Activated CD8-positive, alpha-beta T cell treated with anti-CD3 and anti-CD28 coated beads, Interleukin-2, amount 10 ng/mL, durations not matched to agents 7 days and 5 days (primary cell): ENCODE measurements at regions of chr1 and their contacts with region 1.

Region 1: DNA sequence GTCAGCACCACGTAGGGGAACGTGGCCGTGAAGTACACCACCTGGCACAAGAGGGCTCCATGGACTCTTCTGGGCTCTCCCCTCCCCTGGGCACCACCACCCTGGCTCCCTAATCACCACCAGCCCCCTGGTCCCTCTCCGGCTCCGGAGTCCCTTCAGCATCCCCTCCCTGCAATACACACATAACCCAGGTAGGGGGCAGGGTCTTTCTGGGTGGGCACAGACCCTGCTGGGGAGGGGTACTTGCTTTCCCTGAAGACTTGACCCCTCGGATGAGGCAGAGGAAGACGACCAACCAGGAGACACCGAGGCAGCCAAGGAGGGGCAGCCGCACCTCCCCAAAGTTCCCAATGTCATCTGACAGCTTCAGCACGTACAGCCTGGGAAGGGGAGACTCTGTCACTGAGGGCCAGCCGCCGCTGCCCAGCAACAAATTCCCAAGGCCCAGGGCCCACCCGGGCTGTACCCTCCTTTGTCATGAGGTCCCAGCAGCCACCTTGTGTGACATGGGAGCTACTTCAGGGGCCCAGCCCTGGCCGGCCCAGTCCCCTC is 11.3 kb downstream of the CCDC24 start:
- DNase-seq: no peak
- ATAC-seq: no peak
- H3K4me3 Mint-ChIP-seq: no peak overlapping the region
- H3K27ac Mint-ChIP-seq: no peak overlapping the region
- H3K4me1 Mint-ChIP-seq: peaks cover 10% of the 10 kb centered on the region
- H3K27me3 Mint-ChIP-seq: no peaks in the 10 kb centered on the region

Region 2: GRCh38 chr1:43991476-43992231 is 11.0 kb before region 1 on chr1 and contains the start of gene CCDC24:
- CTCF ChIA-PET with region 1: interaction called, 21 read pairs
- POLR2A ChIA-PET with region 1: no interaction called
- DNase-seq: peak; percentile 80
- ATAC-seq: peak; percentile 87
- H3K4me3 Mint-ChIP-seq: peak within 1 kb of the TSS; percentile 89
- H3K27ac Mint-ChIP-seq: peak within 1 kb of the TSS; percentile 85
- H3K4me1 Mint-ChIP-seq: peaks cover 28% of the 10 kb centered on the region
- H3K27me3 Mint-ChIP-seq: no peaks in the 10 kb centered on the region
- total RNA-seq, gene CCDC24: 1.1 to 1.3 TPM

Region 3: DNA sequence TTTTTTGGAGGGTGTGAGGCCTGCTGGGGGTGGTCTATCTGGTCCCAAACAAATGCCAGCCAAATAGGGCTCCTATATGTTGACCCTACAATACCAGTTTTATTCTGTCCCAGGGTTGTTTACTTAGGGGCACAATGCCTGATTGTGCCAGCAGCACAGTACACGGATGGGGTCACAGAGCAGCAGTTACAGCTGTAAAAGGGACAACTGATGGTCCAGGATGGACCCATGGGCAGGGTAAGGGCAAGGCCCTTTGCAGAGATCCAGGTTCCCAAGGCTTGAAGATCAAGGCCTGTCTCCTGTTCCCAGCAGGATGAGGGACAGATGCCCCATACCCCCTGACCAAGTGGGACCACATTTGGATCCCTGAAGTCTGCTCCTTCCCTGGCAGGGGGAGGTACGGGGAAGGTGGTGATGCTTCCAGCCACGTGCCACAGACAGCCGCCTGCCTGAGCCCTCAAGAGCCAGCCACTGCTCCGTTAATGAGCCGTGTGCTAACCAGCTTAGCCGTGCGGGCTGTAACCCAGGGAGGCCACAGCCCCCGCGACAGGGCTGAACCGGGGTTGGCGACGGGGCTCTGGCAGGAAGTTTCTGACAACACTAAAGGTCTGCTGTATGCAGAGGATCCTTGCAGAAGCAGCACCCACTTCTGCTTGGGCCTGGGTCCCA is 10.4 kb after region 1 on chr1:
- CTCF ChIA-PET with region 1: interaction called, 17 read pairs
- POLR2A ChIA-PET with region 1: no interaction called
- DNase-seq: no peak
- ATAC-seq: peak; percentile 47
- H3K4me3 Mint-ChIP-seq: no peak overlapping the region
- H3K27ac Mint-ChIP-seq: no peak overlapping the region
- H3K4me1 Mint-ChIP-seq: peaks cover 10% of the 10 kb centered on the region
- H3K27me3 Mint-ChIP-seq: no peaks in the 10 kb centered on the region

Region 4: GRCh38 chr1:44021581-44022321 is 19.1 kb after region 1 on chr1:
- CTCF ChIA-PET with region 1: interaction called, 11 read pairs
- POLR2A ChIA-PET with region 1: no interaction called
- DNase-seq: no peak
- ATAC-seq: no peak
- H3K4me3 Mint-ChIP-seq: no peak overlapping the region
- H3K27ac Mint-ChIP-seq: no peak overlapping the region
- H3K4me1 Mint-ChIP-seq: no peaks in the 10 kb centered on the region
- H3K27me3 Mint-ChIP-seq: no peaks in the 10 kb centered on the region

Region 5: DNA sequence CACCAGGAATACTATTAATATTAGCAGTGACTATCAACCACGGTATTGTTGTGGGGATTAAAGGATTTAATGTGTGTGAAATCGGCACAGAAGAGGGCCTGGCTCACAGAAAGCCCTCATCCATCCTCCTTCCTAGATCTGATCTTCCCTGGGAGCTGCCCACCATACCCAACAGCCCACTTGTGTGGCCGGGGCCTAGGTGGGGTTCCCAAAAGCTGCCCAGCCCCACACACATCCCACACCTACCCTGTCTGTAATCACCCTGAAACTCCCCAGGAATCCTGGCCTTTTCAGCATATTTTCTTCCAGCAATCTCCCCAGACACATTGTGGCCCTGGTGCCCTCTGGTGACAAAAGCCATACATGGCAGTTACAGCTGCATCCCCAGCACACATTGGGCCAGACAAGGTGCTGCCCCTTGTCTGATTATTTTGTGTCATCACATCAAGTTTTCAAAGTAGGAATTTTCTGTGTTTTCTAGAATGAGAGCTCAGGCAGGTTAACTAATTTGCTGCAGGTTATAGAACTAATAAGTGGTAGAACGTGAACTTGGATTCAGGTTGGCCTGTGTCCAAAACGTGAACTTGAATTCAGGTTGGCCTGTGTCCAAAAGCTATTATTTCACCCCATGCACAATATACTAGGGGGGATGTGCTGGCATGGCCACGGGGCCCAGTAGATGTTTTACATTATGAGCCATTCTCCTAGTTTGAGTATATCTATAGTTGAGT is 33.9 kb after region 1 on chr1:
- CTCF ChIA-PET with region 1: interaction called, 107 read pairs
- POLR2A ChIA-PET with region 1: no interaction called
- DNase-seq: peak; percentile 77
- ATAC-seq: peak; percentile 70
- H3K4me3 Mint-ChIP-seq: no peak overlapping the region
- H3K27ac Mint-ChIP-seq: no peak overlapping the region
- H3K4me1 Mint-ChIP-seq: peaks cover 10% of the 10 kb centered on the region
- H3K27me3 Mint-ChIP-seq: peaks cover 11% of the 10 kb centered on the region

Region 6: DNA sequence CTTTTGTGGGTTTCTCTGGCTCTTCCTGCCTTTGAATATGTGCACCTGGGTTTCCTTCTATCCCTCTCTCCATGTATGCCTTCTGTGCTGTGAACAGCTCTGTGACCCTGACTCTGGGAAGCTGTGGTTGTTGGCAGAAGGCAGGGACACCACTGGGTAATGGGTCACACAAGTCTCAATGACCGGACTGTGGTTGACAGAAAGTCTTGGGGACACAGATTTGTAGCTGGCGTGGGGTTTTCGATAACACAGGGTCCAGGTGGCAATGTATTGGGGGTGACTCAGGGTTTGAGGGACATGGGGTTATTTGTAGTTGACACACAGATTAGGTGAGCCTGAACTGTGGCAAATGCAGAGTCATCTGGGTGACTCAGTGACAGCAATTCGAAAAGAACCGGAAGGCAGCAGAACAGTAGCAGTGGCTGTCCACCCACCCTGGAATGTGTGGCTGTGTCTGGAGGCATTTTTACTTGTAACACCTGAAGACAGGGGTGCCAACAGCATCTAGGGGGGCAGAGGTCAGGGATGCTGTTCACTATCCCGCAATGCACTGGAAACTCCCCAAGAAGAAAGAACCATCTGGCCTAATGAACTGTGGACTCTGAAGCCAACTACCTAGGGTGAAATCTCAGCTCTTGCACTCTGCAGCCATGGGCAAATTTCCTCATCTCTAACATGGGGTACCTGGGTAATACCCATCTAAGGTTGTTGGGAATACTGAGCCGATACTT is 41.6 kb after region 1 on chr1:
- CTCF ChIA-PET with region 1: interaction called, 74 read pairs
- POLR2A ChIA-PET with region 1: no interaction called
- DNase-seq: no peak
- ATAC-seq: no peak
- H3K4me3 Mint-ChIP-seq: no peak overlapping the region
- H3K27ac Mint-ChIP-seq: no peak overlapping the region
- H3K4me1 Mint-ChIP-seq: peaks cover 11% of the 10 kb centered on the region
- H3K27me3 Mint-ChIP-seq: peaks cover 23% of the 10 kb centered on the region

Region 7: GRCh38 chr1:44049839-44050238 is 47.2 kb after region 1 on chr1:
- CTCF ChIA-PET with region 1: interaction called, 74 read pairs
- POLR2A ChIA-PET with region 1: no interaction called
- DNase-seq: no peak
- ATAC-seq: no peak
- H3K4me3 Mint-ChIP-seq: no peak overlapping the region
- H3K27ac Mint-ChIP-seq: no peak overlapping the region
- H3K4me1 Mint-ChIP-seq: peaks cover 11% of the 10 kb centered on the region
- H3K27me3 Mint-ChIP-seq: peaks cover 16% of the 10 kb centered on the region